ENCODE measurements at regions of chr2 and their contacts with region 1.

Region 1: DNA sequence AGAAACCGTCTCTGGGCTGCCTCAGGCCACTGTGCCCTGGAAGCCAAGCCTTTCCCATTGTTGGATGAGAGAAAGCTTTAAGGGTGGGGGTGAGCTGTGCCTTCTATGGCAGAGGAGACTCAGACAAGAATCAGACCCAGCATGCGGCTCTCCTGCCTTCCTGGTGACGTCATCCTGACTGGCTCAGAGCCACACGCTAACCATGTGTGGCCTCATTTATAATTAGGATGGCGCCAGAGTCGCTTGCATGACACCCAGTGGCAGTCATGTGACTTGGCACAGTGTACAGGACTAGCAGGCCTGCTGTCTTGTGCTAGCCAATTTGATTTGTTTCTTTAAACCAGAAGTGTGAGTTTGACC is 99.2 kb downstream of the SH3BP4 start:
- DNase-seq: peak; percentile 99
- H3K4me3 ChIP-seq: no peak overlapping the region
- H3K27ac ChIP-seq: peak overlapping the region; percentile 78
- H3K4me1 ChIP-seq: peaks cover 20% of the 10 kb centered on the region
- H3K27me3 ChIP-seq: no peaks in the 10 kb centered on the region
- CTCF ChIP-seq: peak; percentile 44

Region 2: DNA sequence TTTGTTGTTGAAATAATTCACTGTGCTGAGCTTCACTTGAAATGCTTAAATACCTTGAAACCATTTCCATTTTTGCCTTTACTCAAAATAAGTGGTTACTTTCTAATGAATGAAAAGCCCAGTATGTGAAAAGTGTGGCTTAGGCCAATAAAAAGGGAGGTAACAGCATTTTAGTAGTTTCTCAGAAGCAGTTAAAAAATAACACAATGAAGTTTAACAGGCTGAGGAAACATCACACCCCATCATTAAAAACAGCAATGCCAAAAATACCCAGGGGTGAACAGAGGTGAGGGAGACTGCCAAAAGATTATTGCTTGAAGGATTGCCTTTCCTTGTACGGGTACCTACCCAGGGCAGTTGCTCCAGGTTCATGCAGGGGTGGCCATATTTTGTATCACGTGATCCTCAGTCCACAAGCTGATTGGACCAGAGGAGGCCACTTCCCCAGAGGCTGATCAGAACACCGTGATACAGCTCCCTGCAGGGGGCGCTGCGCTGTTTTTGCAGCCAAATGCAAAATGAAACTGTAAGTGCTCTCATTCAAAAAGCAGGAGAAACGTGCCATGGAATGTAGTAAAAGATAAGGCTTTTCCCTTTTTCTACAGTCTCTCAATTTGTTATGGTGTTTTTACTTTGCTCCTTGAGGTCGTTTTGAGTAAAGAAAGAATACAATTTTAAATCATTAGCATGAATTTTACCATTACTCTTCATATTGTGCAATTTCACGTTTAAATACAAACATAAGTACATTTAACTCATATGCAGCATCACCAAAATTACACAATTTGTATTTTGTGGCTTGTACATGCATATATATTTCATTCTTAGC is 169.3 kb before region 1 on chr2:
- CTCF ChIA-PET with region 1: no interaction called
- POLR2A ChIA-PET with region 1: no interaction called
- intact Hi-C with region 1: loop called (anchors 10 kb)
- DNase-seq: peak; percentile 93
- H3K4me3 ChIP-seq: peak overlapping the region; percentile 18
- H3K27ac ChIP-seq: no peak overlapping the region
- H3K4me1 ChIP-seq: no peaks in the 10 kb centered on the region
- H3K27me3 ChIP-seq: no peaks in the 10 kb centered on the region
- CTCF ChIP-seq: peak; percentile 91